Calu3 (cell line): ENCODE measurements at regions of chr3 and their contacts with region 1.

Region 1: GRCh38 chr3:177977381-177978158 is 558.7 kb upstream of the KCNMB2 start:
- DNase-seq: peak; percentile 39
- H3K4me3 Mint-ChIP-seq: no peak overlapping the region
- H3K27ac Mint-ChIP-seq: peak overlapping the region; percentile 59
- H3K4me1 Mint-ChIP-seq: peaks cover 37% of the 10 kb centered on the region
- H3K27me3 Mint-ChIP-seq: no peaks in the 10 kb centered on the region
- CTCF ChIP-seq: no peak

Region 2: DNA sequence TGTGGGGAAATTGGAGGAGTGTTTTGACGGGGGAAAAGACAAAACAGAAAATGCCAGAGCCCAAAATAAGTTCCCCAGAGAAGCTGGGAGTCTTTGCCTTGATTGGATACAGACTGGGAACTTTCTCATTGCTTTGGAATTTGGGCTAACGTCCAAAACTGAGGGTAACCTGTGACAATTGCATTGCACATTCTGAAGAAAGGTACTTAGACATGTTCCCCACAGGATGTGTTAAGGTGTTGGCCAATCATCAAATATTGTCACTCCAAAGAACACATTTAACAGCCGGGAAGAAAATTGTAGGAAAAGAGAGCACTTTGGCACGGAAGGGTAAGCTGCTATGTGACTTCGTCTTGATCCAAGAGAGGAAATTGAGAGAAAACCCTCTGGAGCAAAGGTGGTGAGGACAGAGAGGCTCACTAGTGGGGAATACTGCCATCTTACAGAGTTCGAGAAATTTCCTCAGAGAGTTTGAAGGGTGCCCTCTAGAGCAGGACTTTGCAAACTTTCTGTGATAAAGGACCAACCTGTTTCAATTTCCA is 160.8 kb before region 1 on chr3:
- CTCF ChIA-PET with region 1: no interaction called
- intact Hi-C with region 1: loop called (anchors 5 kb)
- DNase-seq: peak; percentile 74
- H3K4me3 Mint-ChIP-seq: peak overlapping the region; percentile 28
- H3K27ac Mint-ChIP-seq: peak overlapping the region; percentile 82
- H3K4me1 Mint-ChIP-seq: peaks cover 61% of the 10 kb centered on the region
- H3K27me3 Mint-ChIP-seq: no peaks in the 10 kb centered on the region
- CTCF ChIP-seq: no peak

Region 3: GRCh38 chr3:177852001-177852816 is 125.4 kb before region 1 on chr3:
- CTCF ChIA-PET with region 1: no interaction called
- intact Hi-C with region 1: no loop called
- DNase-seq: no peak
- H3K4me3 Mint-ChIP-seq: no peak overlapping the region
- H3K27ac Mint-ChIP-seq: no peak overlapping the region
- H3K4me1 Mint-ChIP-seq: peaks cover 10% of the 10 kb centered on the region
- H3K27me3 Mint-ChIP-seq: no peaks in the 10 kb centered on the region
- CTCF ChIP-seq: no peak

Region 4: DNA sequence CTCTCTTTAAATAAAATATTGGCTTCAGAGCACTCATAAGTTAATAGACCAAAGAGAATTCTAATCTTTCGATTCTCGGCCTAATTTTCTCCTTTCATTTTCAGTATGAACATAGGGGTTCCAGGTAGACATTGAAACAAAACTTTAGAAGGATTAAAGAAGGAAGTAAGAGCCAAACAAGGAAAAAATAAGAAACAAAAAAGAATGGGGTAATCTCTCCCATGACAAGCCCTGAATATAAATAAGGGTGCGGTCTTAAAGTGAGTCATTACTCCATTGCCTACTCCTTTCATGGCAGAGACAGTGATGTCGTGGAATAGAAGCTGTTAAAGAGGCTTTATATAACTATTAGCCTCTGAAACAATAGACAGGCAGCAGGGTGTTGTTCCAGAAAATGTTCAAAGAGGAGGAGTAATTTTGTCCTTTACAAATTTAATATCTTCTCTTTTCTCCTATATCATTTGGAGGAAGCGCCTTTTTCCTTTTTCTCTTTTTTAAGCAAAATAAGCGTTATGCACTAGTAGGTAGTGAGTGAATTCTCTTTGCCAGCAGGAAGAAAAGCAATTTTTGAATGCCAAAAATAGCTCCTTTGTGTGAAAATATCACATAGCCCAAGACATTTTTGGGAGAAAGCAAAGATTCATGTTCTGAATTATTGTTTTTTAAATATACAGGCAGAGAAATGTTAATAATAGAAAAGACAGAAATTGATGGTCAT is 49.3 kb before region 1 on chr3:
- CTCF ChIA-PET with region 1: no interaction called
- intact Hi-C with region 1: loop called (anchors 2 kb)
- DNase-seq: peak; percentile 21
- H3K4me3 Mint-ChIP-seq: peak overlapping the region; percentile 8
- H3K27ac Mint-ChIP-seq: peak overlapping the region; percentile 76
- H3K4me1 Mint-ChIP-seq: peaks cover 47% of the 10 kb centered on the region
- H3K27me3 Mint-ChIP-seq: no peaks in the 10 kb centered on the region
- CTCF ChIP-seq: no peak